Astrocyte of the cerebellum (primary cell): ENCODE measurements at regions of chr3 and their contacts with region 1.

Region 1: DNA sequence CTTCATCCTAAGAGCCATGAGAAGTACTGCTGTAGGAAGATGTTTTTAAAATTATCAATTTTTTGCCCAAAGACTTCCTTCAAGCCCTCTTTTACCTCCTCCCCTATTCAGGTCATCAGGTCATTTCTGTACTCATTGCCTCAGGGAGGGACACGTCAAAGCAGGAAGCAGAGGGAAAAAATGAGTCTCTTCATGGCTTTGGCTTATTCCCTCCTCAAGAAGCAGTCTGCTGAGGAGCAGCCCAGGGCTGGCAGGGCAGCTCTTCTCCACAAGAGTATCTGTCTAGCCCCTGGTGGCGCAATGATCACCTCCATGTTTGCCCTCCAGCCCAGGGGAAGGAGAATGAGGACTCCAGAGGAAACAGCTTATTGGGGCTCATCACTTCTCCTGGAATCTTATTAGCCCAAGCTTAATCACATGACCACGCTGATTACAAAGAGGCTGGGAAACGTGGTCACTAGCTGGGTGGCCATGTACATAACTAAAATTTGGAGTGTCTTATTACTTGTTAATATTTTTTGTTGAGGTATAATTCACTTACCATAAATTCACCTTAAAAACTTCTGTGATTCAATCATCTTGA is 44.2 kb upstream of the GATA2 start:
- DNase-seq: no peak
- H3K4me3 ChIP-seq: no peak overlapping the region
- CTCF ChIP-seq: no peak

Region 2: GRCh38 chr3:128438488-128439072 is 98.6 kb before region 1 on chr3:
- in situ Hi-C with region 1: no loop called
- DNase-seq: no peak
- H3K4me3 ChIP-seq: no peak overlapping the region
- CTCF ChIP-seq: peak; percentile 41

Region 3: GRCh38 chr3:128577711-128578110 is 40.5 kb after region 1 on chr3:
- in situ Hi-C with region 1: loop called (anchors 5 kb)
- DNase-seq: no peak
- H3K4me3 ChIP-seq: no peak overlapping the region
- CTCF ChIP-seq: no peak

Region 4: GRCh38 chr3:128598884-128599664 is 61.9 kb after region 1 on chr3:
- in situ Hi-C with region 1: no loop called
- DNase-seq: no peak
- H3K4me3 ChIP-seq: no peak overlapping the region
- CTCF ChIP-seq: no peak

Region 5: GRCh38 chr3:128932516-128933212 is 395.5 kb after region 1 on chr3:
- in situ Hi-C with region 1: no loop called
- DNase-seq: no peak
- H3K4me3 ChIP-seq: no peak overlapping the region
- CTCF ChIP-seq: no peak